CD8-positive, alpha-beta T cell (primary cell): ENCODE measurements at regions of chr10 and their contacts with region 1.

Region 1: GRCh38 chr10:30783939-30784500 is 154.5 kb upstream of the LYZL2 start:
- DNase-seq: peak; percentile 64 to 93 (median 87)
- ATAC-seq: peak; percentile 88
- H3K4me3 ChIP-seq: peak overlapping the region; percentile 55 to 80
- H3K4me3 Mint-ChIP-seq: peak overlapping the region; percentile 84
- H3K27ac ChIP-seq: peak overlapping the region; percentile 64 to 73
- H3K27ac Mint-ChIP-seq: peak overlapping the region; percentile 93
- H3K4me1 ChIP-seq: peaks cover 3% of the 10 kb centered on the region
- H3K4me1 Mint-ChIP-seq: peaks cover 27% of the 10 kb centered on the region
- H3K27me3 ChIP-seq: no peaks in the 10 kb centered on the region
- H3K27me3 Mint-ChIP-seq: no peaks in the 10 kb centered on the region
- CTCF ChIP-seq: peak; percentile 85

Region 2: DNA sequence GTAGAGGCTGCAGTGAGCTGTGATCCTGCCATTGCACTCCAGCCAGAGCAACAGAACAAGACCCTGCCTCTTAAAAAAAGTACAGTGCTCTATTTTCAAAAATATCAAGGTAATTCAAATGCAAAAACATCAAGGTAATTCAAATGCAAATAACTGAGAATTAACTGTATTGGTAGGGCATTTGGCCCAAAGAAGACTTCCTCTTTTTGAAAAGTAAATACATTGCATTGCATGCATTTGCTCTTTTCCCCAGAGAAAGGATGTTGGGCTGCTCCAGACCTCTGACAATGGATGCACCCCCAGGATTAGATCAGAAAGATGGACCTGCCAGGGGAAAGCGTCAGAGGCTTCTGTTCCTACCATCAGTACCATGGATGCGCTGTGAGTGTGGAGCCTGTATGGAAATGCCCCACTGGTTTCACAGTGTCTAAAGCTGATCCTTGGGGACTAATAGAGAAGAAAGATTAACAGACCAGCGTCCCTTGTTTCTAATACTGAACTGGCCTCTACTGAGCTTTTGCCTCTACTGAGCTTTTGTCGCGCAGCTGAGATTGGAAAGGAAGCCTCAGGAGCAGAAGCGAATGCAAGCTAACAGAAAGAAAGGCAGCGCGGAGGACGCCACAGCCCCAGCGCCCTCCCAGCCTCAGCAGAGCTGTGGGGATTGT is 60.9 kb before region 1 on chr10:
- CTCF ChIA-PET with region 1: no interaction called
- POLR2A ChIA-PET with region 1: no interaction called
- intact Hi-C with region 1: loop called in 1 of 2 experiments (anchors 5 kb)
- DNase-seq: no peak
- ATAC-seq: no peak
- H3K4me3 ChIP-seq: no peak overlapping the region
- H3K4me3 Mint-ChIP-seq: no peak overlapping the region
- H3K27ac ChIP-seq: no peak overlapping the region
- H3K27ac Mint-ChIP-seq: no peak overlapping the region
- H3K4me1 ChIP-seq: peaks cover 3% of the 10 kb centered on the region
- H3K4me1 Mint-ChIP-seq: no peaks in the 10 kb centered on the region
- H3K27me3 ChIP-seq: no peaks in the 10 kb centered on the region
- H3K27me3 Mint-ChIP-seq: no peaks in the 10 kb centered on the region
- CTCF ChIP-seq: no peak

Region 3: GRCh38 chr10:31031558-31032257 is 247.7 kb after region 1 on chr10 and contains the start of gene ZNF438:
- CTCF ChIA-PET with region 1: interaction called, 40 read pairs
- POLR2A ChIA-PET with region 1: interaction called, 51 read pairs
- intact Hi-C with region 1: loop called (anchors 1 to 2 kb)
- DNase-seq: peak; percentile 91 to 98 (median 95)
- ATAC-seq: peak; percentile 81
- H3K4me3 ChIP-seq: peak within 1 kb of the TSS; percentile 74 to 98
- H3K4me3 Mint-ChIP-seq: peak within 1 kb of the TSS; percentile 90
- H3K27ac ChIP-seq: peak within 1 kb of the TSS; percentile 99 to 100
- H3K27ac Mint-ChIP-seq: peak within 1 kb of the TSS; percentile 99
- H3K4me1 ChIP-seq: peaks cover 20% of the 10 kb centered on the region
- H3K4me1 Mint-ChIP-seq: peaks cover 21% of the 10 kb centered on the region
- H3K27me3 ChIP-seq: no peaks in the 10 kb centered on the region
- H3K27me3 Mint-ChIP-seq: no peaks in the 10 kb centered on the region
- CTCF ChIP-seq: peak; percentile 59
- total RNA-seq, gene ZNF438: 1.5 to 1.7 TPM

Region 4: DNA sequence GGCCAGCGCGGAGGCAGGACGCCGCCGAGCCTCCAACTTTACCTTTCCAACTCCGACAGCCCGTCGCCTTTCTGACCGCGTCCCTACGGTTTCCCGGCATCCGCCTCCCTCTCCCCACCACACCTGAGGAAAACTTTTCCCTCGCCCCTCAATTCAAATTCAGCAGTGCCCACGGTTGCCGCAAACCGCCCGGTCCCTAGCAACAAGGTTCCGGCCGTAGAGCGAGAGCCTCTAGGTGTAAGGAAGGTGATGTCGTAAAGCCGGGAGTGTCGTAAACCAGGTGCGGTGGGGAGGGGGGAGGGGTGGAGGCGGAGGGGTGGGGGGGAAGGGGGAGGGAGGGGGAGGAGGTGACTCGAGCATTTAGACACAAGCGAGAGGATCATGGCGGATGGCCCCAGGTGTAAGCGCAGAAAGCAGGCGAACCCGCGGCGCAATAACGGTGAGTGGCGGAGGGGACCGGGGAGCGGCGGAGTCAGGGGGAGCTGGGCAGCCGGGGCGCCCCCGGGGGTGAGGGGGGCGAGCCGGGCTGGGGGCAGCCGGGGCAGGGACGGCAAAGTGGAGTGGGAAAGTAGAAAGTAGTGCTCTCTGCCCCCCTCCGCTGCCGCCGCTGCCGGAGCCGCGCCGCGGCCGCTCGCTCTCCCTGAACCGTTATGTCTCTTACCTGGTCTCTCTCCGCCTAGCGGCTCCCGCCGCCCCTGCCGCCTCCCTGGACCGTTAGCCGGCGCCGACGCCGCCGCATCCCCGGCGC is 535.0 kb after region 1 on chr10 and contains the start of gene ZEB1:
- CTCF ChIA-PET with region 1: no interaction called
- POLR2A ChIA-PET with region 1: interaction called, 4 read pairs
- intact Hi-C with region 1: loop called (anchors 1 to 2 kb)
- DNase-seq: peak; percentile 83 to 97 (median 90)
- ATAC-seq: peak; percentile 42
- H3K4me3 ChIP-seq: peak within 1 kb of the TSS; percentile 92 to 95
- H3K4me3 Mint-ChIP-seq: peak within 1 kb of the TSS; percentile 100
- H3K27ac ChIP-seq: peak within 1 kb of the TSS; percentile 90 to 95
- H3K27ac Mint-ChIP-seq: peak within 1 kb of the TSS; percentile 100
- H3K4me1 ChIP-seq: peaks cover 28% of the 10 kb centered on the region
- H3K4me1 Mint-ChIP-seq: peaks cover 39% of the 10 kb centered on the region
- H3K27me3 ChIP-seq: no peaks in the 10 kb centered on the region
- H3K27me3 Mint-ChIP-seq: no peaks in the 10 kb centered on the region
- CTCF ChIP-seq: no peak
- total RNA-seq, gene ZEB1: 145 to 153 TPM

Region 5: GRCh38 chr10:31759799-31760626 is 976.0 kb after region 1 on chr10:
- CTCF ChIA-PET with region 1: no interaction called
- POLR2A ChIA-PET with region 1: interaction called, 5 read pairs
- intact Hi-C with region 1: loop called (anchors 1 to 2 kb)
- DNase-seq: peak; percentile 90 to 98 (median 94)
- ATAC-seq: peak; percentile 93
- H3K4me3 ChIP-seq: peak overlapping the region; percentile 98 to 99
- H3K4me3 Mint-ChIP-seq: peak overlapping the region; percentile 88
- H3K27ac ChIP-seq: peak overlapping the region; percentile 92 to 95
- H3K27ac Mint-ChIP-seq: peak overlapping the region; percentile 97
- H3K4me1 ChIP-seq: peaks cover 8% of the 10 kb centered on the region
- H3K4me1 Mint-ChIP-seq: peaks cover 14% of the 10 kb centered on the region
- H3K27me3 ChIP-seq: no peaks in the 10 kb centered on the region
- H3K27me3 Mint-ChIP-seq: no peaks in the 10 kb centered on the region
- CTCF ChIP-seq: no peak

Region 6: GRCh38 chr10:31928549-31929260 is 1144.7 kb after region 1 on chr10 and contains the start of gene ARHGAP12:
- CTCF ChIA-PET with region 1: interaction called, 3 read pairs
- POLR2A ChIA-PET with region 1: no interaction called
- intact Hi-C with region 1: loop called (anchors 2 to 5 kb)
- DNase-seq: peak; percentile 70 to 92 (median 84)
- ATAC-seq: peak; percentile 67
- H3K4me3 ChIP-seq: peak within 1 kb of the TSS; percentile 90 to 95
- H3K4me3 Mint-ChIP-seq: peak within 1 kb of the TSS; percentile 94
- H3K27ac ChIP-seq: peak within 1 kb of the TSS; percentile 65 to 87
- H3K27ac Mint-ChIP-seq: peak within 1 kb of the TSS; percentile 83
- H3K4me1 ChIP-seq: peaks cover 41% of the 10 kb centered on the region
- H3K4me1 Mint-ChIP-seq: peaks cover 49% of the 10 kb centered on the region
- H3K27me3 ChIP-seq: no peaks in the 10 kb centered on the region
- H3K27me3 Mint-ChIP-seq: no peaks in the 10 kb centered on the region
- CTCF ChIP-seq: no peak
- total RNA-seq, gene ARHGAP12: 15.7 to 15.9 TPM

Region 7: DNA sequence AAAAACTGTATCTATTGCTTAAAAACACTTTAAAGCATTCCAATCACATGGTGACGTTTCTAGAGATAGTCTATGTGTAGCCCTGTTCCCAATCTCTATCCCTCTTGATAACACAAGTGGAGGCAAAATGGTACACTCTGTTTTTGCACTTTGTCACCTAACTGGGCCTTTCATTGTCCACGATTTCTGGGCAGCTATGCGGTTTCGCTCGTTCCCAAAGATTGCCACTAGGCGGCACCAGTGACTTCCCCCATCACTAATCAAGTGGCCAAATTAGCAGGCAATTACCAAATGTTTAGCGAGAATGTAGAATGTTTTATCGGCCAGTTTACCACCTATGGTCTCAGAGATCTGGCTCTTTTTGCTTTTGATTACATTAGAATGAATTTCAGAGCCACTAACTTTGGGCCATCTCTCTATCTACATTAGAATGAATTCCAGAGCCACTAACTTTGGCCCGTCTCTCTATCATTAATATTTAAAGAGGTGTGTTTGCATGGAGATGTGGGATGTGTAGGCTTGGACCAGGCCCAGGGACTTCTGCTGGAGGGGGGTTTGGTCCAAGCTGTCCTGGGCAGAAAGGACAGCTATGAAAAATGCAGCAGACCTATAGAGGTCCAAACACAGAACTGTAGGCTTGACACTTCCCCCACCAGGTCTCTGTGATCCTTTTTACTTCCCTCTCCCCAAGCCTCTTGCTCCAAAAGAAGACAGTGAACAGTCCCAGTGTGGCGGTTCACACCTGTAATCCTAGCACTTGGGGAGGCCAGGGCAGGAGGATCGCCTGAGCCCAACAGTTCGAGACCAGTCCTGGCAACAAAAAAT is 1472.8 kb after region 1 on chr10:
- CTCF ChIA-PET with region 1: no interaction called
- POLR2A ChIA-PET with region 1: no interaction called
- intact Hi-C with region 1: loop called in 1 of 2 experiments (anchors 5 kb)
- DNase-seq: peak; percentile 43 to 81 (median 67)
- ATAC-seq: peak; percentile 73
- H3K4me3 ChIP-seq: no peak overlapping the region
- H3K4me3 Mint-ChIP-seq: no peak overlapping the region
- H3K27ac ChIP-seq: no peak overlapping the region
- H3K27ac Mint-ChIP-seq: no peak overlapping the region
- H3K4me1 ChIP-seq: no peaks in the 10 kb centered on the region
- H3K4me1 Mint-ChIP-seq: peaks cover 5% of the 10 kb centered on the region
- H3K27me3 ChIP-seq: no peaks in the 10 kb centered on the region
- H3K27me3 Mint-ChIP-seq: no peaks in the 10 kb centered on the region
- CTCF ChIP-seq: peak; percentile 89